Posterior cingulate gyrus (tissue), 11 donors: ENCODE measurements at regions of chr7 and their contacts with region 1.

Region 1: DNA sequence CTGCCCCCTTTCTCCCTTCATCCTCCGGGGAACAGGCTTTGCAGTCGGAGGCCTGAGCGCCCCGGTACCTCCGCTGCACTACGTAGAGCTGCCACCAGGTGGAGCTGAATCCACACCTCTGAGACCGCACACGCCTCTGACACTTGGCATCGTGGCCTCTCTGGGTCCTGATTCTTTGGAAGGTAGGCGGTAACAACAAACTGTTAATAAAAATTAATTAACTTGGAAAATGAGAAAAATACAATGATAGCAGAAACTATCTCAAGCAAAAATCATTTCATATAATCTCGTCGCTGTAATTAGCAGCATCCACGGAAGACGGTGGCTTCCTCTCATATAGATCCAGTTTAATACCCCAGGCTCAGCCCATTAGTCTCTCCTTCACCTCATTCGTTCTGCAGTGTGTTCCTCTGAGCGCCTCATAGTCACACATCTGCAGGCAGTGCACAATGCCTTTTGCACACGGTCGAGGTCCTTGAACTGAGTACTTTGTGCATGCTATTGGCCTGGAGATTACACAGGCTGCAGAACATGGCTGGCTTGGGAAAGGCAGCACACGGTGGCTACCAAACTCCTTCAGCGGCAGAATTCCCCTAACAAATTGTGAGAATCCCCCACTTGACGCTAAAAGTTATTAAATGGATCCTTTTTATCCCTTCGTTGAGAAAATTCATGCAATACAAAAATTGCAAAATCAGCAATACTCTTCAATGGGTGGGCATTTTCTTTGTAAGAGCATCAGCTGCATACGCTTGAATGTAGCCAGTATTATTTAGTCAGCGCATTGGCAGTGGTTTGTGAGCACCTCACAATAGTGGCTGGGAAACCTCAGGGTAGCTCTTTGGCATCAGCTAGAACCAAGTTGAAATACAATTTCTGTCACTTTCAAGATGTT is 18.7 kb downstream of the OR9A2 start:
- DNase-seq: peak; percentile 66 to 97 (median 84)

Region 2: DNA sequence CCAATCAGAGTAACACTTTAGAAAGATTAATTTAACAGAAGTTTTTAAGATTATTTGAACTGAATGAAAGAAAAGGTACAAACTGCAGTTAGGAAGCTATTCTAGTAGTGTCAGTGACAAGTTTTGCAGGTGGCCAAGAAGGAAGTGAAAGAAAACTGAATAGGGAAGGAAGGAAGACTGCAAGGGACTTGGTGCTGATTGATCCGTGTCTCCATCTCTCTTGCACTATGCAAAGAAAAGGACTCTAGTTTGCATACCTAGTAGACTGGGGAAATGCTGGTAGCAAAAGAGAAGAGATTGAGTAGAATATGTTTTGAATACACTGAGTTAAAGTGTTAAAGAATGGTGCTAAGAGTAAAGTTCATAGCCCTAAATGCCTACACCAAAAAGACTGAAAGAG is 76.9 kb after region 1 on chr7:
- intact Hi-C with region 1: no loop called
- DNase-seq: no peak

Region 3: GRCh38 chr7:143214789-143215679 is 206.8 kb after region 1 on chr7:
- intact Hi-C with region 1: loop called (anchors 1 kb)
- DNase-seq: peak in 5 of 10 donors; percentile 33 to 75 (median 41)